Activated CD8-positive, alpha-beta memory T cell treated with anti-CD3 and anti-CD28 coated beads, Interleukin-2, amount 10 ng/mL, durations not matched to agents 7 days and 5 days (primary cell): ENCODE measurements at regions of chr18 and their contacts with region 1.

Region 1: DNA sequence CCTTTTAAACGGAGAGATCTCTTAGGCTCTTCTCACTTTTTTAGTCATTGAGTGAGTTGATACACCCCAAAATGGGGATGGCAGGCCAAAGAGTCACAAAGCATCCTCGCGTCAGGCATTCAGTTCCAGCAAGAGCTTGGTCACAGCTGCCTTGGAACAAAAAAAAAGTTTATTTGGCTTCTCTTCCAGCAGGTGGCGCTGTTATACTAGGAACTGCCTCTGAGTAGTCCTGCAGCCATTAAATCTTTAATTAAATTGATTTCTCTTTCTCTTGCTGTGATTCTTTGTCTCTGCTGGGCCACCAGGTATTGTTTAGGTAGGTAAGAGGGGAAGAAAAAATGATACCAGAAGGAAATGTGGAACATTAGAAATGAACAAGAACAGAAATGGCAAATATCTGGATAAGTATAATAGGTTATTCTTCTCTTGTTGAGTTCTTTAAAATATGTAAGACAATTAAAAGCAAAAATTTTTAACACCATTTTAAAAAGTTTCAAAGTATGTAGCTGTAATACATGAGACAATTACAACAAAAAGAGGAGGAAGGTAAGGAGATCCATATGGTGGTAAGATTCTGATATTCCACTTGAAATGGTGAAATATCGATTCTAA is 175.1 kb downstream of the GALNT1 start:
- DNase-seq: peak; percentile 61
- ATAC-seq: peak; percentile 69
- H3K4me3 Mint-ChIP-seq: no peak overlapping the region
- H3K27ac Mint-ChIP-seq: no peak overlapping the region
- H3K4me1 Mint-ChIP-seq: no peaks in the 10 kb centered on the region
- H3K27me3 Mint-ChIP-seq: peaks cover 18% of the 10 kb centered on the region

Region 2: GRCh38 chr18:35526476-35527120 is 230.0 kb before region 1 on chr18:
- CTCF ChIA-PET with region 1: no interaction called
- DNase-seq: no peak
- ATAC-seq: no peak
- H3K4me3 Mint-ChIP-seq: no peak overlapping the region
- H3K27ac Mint-ChIP-seq: no peak overlapping the region
- H3K4me1 Mint-ChIP-seq: peaks cover 6% of the 10 kb centered on the region
- H3K27me3 Mint-ChIP-seq: peaks cover 26% of the 10 kb centered on the region

Region 3: DNA sequence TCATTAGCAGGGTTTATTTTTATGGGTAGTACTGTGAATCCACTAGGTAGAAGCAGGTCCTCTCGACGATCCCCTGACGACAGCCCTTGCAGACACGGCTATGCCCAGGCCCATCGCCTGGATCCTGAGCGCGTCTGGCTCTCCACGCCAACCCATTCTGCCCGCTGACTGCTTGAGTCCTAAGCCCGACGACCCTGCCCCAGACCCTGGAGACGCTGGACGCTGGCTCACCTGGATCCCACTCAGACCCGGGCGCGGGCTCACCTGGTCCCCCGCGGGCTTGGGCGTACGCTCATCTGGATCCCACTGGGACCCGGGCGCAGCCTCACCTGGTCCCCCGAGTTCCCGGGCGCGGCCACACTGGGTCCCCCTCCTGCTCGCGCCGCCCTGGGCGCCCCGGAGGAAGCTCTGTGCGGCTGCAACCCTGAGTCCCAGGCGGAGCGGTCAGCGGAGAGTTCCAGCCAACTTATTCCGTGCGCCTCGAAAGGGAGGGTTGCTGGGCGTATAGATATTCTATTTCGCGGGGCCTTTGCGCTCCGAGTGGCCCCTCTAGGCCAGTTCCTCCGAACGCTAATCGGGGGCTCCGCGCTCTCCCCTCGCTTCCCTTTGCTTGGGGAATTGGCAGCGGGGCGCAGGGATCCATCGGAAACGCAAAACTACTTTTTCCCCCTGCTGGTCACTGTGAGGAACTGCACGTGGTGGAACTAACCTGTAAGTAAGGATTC is 193.5 kb after region 1 on chr18:
- CTCF ChIA-PET with region 1: interaction called, 13 read pairs
- DNase-seq: peak; percentile 52
- ATAC-seq: peak; percentile 76
- H3K4me3 Mint-ChIP-seq: peak overlapping the region; percentile 65
- H3K27ac Mint-ChIP-seq: no peak overlapping the region
- H3K4me1 Mint-ChIP-seq: peaks cover 3% of the 10 kb centered on the region
- H3K27me3 Mint-ChIP-seq: peaks cover 19% of the 10 kb centered on the region